ENCODE measurements at regions of chr11 and their contacts with region 1.

Region 1: GRCh38 chr11:60841797-60842667 is at the start of gene CCDC86:
- DNase-seq: peak; percentile 98 to 99
- ATAC-seq: peak; percentile 98
- H3K4me3 ChIP-seq: peak within 1 kb of the TSS; percentile 32 to 46
- H3K27ac ChIP-seq: peak within 1 kb of the TSS in 1 of 2 donors; percentile 8
- H3K4me1 ChIP-seq: peaks cover 0 to 7% of the 10 kb centered on the region in 2 donors
- H3K27me3 ChIP-seq: no peaks in the 10 kb centered on the region
- total RNA-seq, gene CCDC86: 11.8 to 15.2 TPM

Region 2: DNA sequence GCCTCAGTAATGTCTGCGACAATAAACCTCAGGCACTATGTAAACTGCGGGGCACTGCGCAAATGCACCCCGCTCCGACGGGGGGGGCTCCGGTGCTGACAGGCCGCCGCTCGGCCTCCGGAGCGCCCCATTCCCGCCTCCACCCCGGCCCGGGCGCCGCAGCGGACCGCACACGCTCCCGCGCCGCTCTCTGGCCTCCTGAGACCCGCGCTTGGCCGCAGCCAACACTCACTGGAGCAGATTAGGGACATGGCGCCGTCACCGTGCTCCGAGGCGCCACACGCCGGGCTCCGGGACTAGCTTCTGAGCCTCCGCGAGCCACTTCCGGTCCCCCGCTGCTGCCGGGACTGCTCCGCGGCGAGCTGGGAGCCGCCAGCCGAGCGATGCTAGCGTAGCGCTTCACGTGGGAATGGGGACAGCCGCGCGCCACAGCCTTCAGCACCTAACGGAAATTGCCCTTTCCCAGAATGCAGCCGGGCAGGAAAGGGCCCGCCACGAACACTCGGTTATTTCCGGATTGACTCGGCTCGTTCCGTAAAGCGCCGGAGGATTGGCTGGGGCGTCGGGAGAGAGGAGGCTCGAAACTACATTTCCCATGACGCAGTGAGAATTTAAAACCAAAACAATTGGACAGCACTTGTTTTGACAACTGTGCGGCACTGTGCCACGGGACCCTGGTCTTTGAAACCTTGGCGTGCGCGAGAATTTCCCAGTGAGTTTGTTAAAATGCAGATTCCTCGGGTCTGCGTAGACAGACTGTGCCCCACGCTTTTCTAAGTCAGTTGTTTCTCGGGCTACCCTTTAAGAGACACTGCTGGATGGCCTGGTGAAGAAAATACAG is 64.3 kb after region 1 on chr11 and contains the start of gene PRPF19:
- intact Hi-C with region 1: loop called (anchors 5 kb)
- DNase-seq: peak; percentile 98 to 99
- ATAC-seq: peak; percentile 98
- H3K4me3 ChIP-seq: peak within 1 kb of the TSS; percentile 93
- H3K27ac ChIP-seq: peak within 1 kb of the TSS; percentile 80 to 93
- H3K4me1 ChIP-seq: no peaks in the 10 kb centered on the region
- H3K27me3 ChIP-seq: no peaks in the 10 kb centered on the region
- total RNA-seq, gene PRPF19: 47.7 to 55.6 TPM

Region 3: DNA sequence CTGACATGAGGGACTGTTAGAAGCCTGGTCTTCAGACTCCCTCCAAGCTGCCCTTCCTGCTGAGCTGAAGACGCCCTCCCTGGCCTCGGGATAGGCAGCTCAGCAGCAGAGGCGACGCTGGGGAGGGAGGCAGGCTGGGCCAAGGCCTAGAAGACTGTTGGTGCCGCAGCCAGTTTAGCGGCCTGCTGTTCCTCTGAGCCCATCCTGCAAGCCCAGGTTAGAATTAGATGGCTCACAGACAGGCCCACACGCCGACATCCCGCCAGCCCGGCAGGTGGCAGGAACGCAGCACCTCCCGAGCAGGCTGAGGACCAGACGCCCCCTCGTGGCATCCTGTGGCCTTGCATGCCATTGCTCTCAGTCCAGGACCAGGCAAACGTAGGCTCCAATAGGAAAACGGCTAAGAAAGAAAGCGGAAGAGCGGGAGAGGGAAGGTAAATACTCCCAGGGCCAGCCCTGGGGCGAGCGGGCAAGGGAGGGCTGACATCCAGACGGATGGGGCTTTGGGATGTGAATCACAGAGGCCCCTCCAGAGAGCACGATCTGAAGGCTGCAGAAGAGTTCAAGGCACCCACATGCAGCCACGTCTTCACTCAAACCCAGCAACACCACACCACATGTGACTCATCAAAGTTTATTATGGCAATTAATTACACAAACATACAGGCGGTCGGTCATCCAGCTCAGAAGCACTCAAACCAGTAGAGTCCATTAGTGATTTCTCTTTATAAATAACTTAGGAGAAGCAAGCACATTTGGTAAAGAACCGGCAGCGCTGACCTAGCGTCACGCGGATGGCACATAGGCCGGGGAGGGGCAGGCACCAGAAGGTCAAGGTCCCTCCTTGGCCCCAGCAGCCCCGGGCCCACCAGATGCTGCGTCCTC is 287.8 kb after region 1 on chr11:
- intact Hi-C with region 1: loop called in 1 of 2 experiments (anchors 5 kb)
- DNase-seq: peak; percentile 91 to 95
- ATAC-seq: peak; percentile 88
- H3K4me3 ChIP-seq: no peak overlapping the region
- H3K27ac ChIP-seq: no peak overlapping the region
- H3K4me1 ChIP-seq: no peaks in the 10 kb centered on the region
- H3K27me3 ChIP-seq: no peaks in the 10 kb centered on the region

Region 4: GRCh38 chr11:61161190-61162091 is 319.4 kb after region 1 on chr11 and contains the start of gene VPS37C:
- intact Hi-C with region 1: loop called in 1 of 2 experiments (anchors 5 kb)
- DNase-seq: peak; percentile 94 to 97
- ATAC-seq: peak; percentile 97
- H3K4me3 ChIP-seq: peak within 1 kb of the TSS; percentile 65 to 74
- H3K27ac ChIP-seq: peak within 1 kb of the TSS; percentile 74 to 79
- H3K4me1 ChIP-seq: peaks cover 0 to 6% of the 10 kb centered on the region in 2 donors
- H3K27me3 ChIP-seq: no peaks in the 10 kb centered on the region
- total RNA-seq, gene VPS37C: 29.8 to 39.9 TPM

Region 5: GRCh38 chr11:61392981-61393595 is 551.1 kb after region 1 on chr11:
- intact Hi-C with region 1: loop called in 1 of 2 experiments (anchors 10 kb)
- DNase-seq: no peak
- ATAC-seq: peak; percentile 55
- H3K4me3 ChIP-seq: peak overlapping the region; percentile 42 to 81
- H3K27ac ChIP-seq: peak overlapping the region in 1 of 2 donors; percentile 30
- H3K4me1 ChIP-seq: no peaks in the 10 kb centered on the region
- H3K27me3 ChIP-seq: no peaks in the 10 kb centered on the region

Measured in aorta (tissue), 5 donors.